Caco-2 (cell line): ENCODE measurements at regions of chr11 and their contacts with region 1.

Region 1: GRCh38 chr11:20243974-20244373 is 83.7 kb upstream of the DBX1 start:
- DNase-seq: no peak
- H3K4me3 ChIP-seq: no peak overlapping the region
- H3K4me3 Mint-ChIP-seq: no peak overlapping the region
- H3K27ac Mint-ChIP-seq: no peak overlapping the region
- H3K4me1 ChIP-seq: no peaks in the 10 kb centered on the region
- H3K4me1 Mint-ChIP-seq: no peaks in the 10 kb centered on the region
- H3K27me3 ChIP-seq: no peaks in the 10 kb centered on the region
- H3K27me3 Mint-ChIP-seq: peaks cover 20% of the 10 kb centered on the region
- CTCF ChIP-seq: peak; percentile 39 to 59

Region 2: GRCh38 chr11:20337526-20338154 is 93.7 kb after region 1 on chr11:
- CTCF ChIA-PET with region 1: no interaction called
- POLR2A ChIA-PET with region 1: no interaction called
- intact Hi-C with region 1: loop called (anchors 1 kb)
- DNase-seq: peak in 1 of 2 experiments; percentile 43
- H3K4me3 ChIP-seq: no peak overlapping the region
- H3K4me3 Mint-ChIP-seq: no peak overlapping the region
- H3K27ac Mint-ChIP-seq: no peak overlapping the region
- H3K4me1 ChIP-seq: no peaks in the 10 kb centered on the region
- H3K4me1 Mint-ChIP-seq: peaks cover 7% of the 10 kb centered on the region
- H3K27me3 ChIP-seq: no peaks in the 10 kb centered on the region
- H3K27me3 Mint-ChIP-seq: peaks cover 4% of the 10 kb centered on the region
- CTCF ChIP-seq: peak; percentile 63 to 70

Region 3: DNA sequence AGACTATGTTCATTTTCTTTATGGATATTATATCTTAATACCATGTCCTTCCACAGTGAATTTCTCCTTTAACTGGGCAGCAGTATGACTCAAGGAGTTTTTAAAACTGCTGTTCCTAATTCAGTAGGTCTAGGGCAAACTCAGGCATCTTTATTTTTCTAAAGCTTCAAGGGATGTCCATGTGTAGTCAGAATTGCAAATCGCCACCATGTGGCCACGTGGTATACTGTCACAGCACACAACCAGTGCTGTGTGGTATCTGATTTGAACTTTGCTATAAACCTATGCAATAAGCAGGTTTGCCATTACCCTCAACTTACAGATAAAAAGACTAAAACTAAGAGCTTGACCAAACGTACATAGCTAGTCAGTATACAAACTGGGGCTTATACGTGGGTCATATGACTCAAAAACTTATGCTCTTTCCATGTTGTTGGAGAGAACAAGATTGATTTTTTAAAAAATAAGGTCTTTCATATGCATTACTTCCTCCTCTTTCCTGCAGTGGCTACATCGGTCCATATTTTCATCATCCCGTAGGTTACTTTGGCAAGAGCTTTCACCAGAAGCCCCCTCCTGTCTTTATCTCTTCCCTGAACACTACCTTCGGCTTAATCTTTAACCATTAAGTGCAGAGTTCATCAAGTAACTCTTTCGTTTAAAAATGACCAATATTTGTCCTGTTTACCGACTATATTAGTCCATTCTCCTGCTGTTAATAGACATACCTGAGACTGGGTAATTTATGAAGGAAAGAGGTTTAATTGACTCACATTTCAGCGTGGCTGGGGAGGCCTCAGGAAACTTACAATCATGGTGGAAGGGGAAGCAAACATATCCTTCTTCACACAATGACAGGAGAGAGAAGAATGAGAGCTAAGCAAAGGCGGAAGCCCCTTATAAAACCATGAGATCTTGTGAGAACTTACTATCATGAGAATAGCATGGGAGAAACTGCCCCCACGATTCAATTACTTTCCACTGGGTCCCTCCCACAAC is 111.5 kb after region 1 on chr11:
- CTCF ChIA-PET with region 1: no interaction called
- POLR2A ChIA-PET with region 1: no interaction called
- intact Hi-C with region 1: loop called (anchors 1 kb)
- DNase-seq: peak; percentile 70 to 75
- H3K4me3 ChIP-seq: 0 out of 2 replicates have a peak overlapping the region, but pooled peaks have one; percentile 2
- H3K4me3 Mint-ChIP-seq: peak overlapping the region; percentile 71
- H3K27ac Mint-ChIP-seq: peak overlapping the region; percentile 81
- H3K4me1 ChIP-seq: peaks cover 13% of the 10 kb centered on the region
- H3K4me1 Mint-ChIP-seq: peaks cover 30% of the 10 kb centered on the region
- H3K27me3 ChIP-seq: no peaks in the 10 kb centered on the region
- H3K27me3 Mint-ChIP-seq: no peaks in the 10 kb centered on the region
- CTCF ChIP-seq: peak; percentile 69 to 74